ENCODE measurements at regions of chr1 and their contacts with region 1.

Region 1: GRCh38 chr1:13819642-13820041 is 119.7 kb downstream of the PRDM2 start:
- DNase-seq: no peak
- ATAC-seq: no peak
- H3K4me3 ChIP-seq: no peak overlapping the region
- H3K27ac ChIP-seq: no peak overlapping the region
- H3K4me1 ChIP-seq: no peaks in the 10 kb centered on the region
- H3K27me3 ChIP-seq: no peaks in the 10 kb centered on the region

Region 2: DNA sequence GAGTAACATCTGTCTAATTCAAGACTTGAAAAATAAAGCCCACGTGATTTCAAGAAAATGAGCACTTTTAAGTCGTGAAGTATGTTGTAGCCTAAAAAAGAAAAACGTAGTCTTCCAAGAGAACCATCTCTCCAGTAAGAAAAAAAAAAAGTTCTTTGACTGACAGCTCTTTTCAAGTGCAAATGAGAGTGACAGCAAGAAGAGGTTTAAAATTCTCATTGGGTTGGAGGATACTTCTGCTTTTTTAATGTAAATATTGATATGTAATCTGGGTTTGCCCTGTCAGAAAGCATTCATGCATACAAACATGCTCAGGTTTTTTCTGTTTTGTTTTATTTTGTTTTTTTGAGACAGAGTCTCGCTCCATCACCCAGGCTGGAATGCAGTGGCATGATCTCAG is 152.0 kb before region 1 on chr1:
- intact Hi-C with region 1: loop called in 3 of 4 experiments (anchors 5 to 10 kb)
- DNase-seq: no peak
- ATAC-seq: no peak
- H3K4me3 ChIP-seq: no peak overlapping the region
- H3K27ac ChIP-seq: no peak overlapping the region
- H3K4me1 ChIP-seq: no peaks in the 10 kb centered on the region
- H3K27me3 ChIP-seq: no peaks in the 10 kb centered on the region

Region 3: GRCh38 chr1:13864760-13865159 is 45.1 kb after region 1 on chr1:
- intact Hi-C with region 1: no loop called
- DNase-seq: peak in 1 of 3 donors; percentile 14
- ATAC-seq: no peak
- H3K4me3 ChIP-seq: no peak overlapping the region
- H3K27ac ChIP-seq: no peak overlapping the region
- H3K4me1 ChIP-seq: no peaks in the 10 kb centered on the region
- H3K27me3 ChIP-seq: no peaks in the 10 kb centered on the region